ENCODE measurements at regions of chr2 and their contacts with region 1.

Region 1: DNA sequence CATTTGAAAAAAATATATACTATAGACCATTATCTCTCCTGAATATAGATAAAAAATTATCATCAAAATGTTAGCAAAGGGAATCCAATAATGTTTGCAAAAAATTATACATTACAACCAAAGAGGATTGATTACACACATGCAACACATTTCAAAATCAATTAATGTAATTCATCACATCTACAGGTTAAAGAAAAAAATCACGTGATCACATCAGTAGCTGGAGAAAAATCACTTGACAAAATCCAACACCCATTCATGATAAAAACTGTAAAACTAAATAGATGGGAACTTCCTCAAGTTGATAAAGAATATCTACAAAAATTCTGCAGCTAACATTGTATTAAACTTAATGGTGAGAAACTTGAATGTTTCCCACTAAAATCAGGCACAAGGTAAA is 1047.5 kb upstream of the CNTNAP5 start:
- DNase-seq: no peak
- ATAC-seq: no peak
- H3K4me3 ChIP-seq: no peak overlapping the region
- H3K27ac ChIP-seq: no peak overlapping the region
- H3K4me1 ChIP-seq: peaks cover 7% of the 10 kb centered on the region; the same call in 1 of the 2 replicates
- H3K27me3 ChIP-seq: no peaks in the 10 kb centered on the region
- CTCF ChIP-seq: no peak

Region 2: GRCh38 chr2:123366239-123366837 is 388.8 kb after region 1 on chr2:
- CTCF ChIA-PET with region 1: no interaction called
- POLR2A ChIA-PET with region 1: no interaction called
- intact Hi-C with region 1: no loop called
- DNase-seq: peak; percentile 12
- ATAC-seq: peak; percentile 62
- H3K4me3 ChIP-seq: no peak overlapping the region
- H3K27ac ChIP-seq: no peak overlapping the region
- H3K4me1 ChIP-seq: peaks cover 19% of the 10 kb centered on the region
- H3K27me3 ChIP-seq: no peaks in the 10 kb centered on the region
- CTCF ChIP-seq: no peak

Region 3: DNA sequence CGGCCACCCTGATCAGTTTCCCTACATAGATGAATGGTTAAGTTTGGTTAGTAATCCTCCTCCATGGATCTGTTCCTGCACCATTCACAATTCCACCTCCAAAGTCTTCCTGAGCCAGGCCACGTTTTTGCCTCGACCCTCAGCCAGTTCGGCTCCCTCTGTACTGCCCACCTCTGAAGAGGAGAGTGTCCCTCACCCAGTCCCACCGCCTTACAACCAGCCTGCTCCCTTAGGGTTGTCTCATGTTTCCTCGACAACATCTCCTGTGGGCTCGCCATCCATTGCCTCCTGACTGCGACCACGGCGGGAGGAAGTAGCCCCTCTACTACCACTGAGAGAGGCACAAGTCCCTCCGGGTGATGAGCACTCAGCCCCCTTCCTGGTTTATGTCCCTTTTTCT is 709.5 kb after region 1 on chr2:
- CTCF ChIA-PET with region 1: no interaction called
- POLR2A ChIA-PET with region 1: interaction called, 20 read pairs
- intact Hi-C with region 1: no loop called
- DNase-seq: no peak
- ATAC-seq: no peak
- H3K4me3 ChIP-seq: no peak overlapping the region
- H3K27ac ChIP-seq: no peak overlapping the region
- H3K4me1 ChIP-seq: no peaks in the 10 kb centered on the region
- H3K27me3 ChIP-seq: no peaks in the 10 kb centered on the region
- CTCF ChIP-seq: no peak

Measured in PC-3 (cell line).